HepG2 (cell line): ENCODE measurements at regions of chr19 and their contacts with region 1.

Region 1: GRCh38 chr19:38683393-38684080 is 36.1 kb downstream of the ACTN4 start:
- DNase-seq: peak; percentile 96
- ATAC-seq: peak; percentile 85
- H3K4me3 ChIP-seq: peak overlapping the region in 1 of 3 experiments; percentile 27; a peak in 2 of 6 replicates
- H3K27ac ChIP-seq: peak overlapping the region; percentile 85
- H3K4me1 ChIP-seq: peaks cover 99% of the 10 kb centered on the region
- H3K27me3 ChIP-seq: no peaks in the 10 kb centered on the region
- CTCF ChIP-seq: no peak
- EP300 ChIP-seq: peak in 1 of 2 experiments; percentile 50; a peak in 2 of 4 replicates
- POLR2A ChIP-seq: peak in 1 of 2 experiments; percentile 35; a peak in 1 of 4 replicates
- RAD21 ChIP-seq: no peak

Region 2: GRCh38 chr19:38658462-38659306 is 24.9 kb before region 1 on chr19:
- CTCF ChIA-PET with region 1: no interaction called
- POLR2A ChIA-PET with region 1: interaction called, 34 read pairs
- in situ Hi-C with region 1: no loop called
- intact Hi-C with region 1: loop called (anchors 5 kb)
- DNase-seq: peak; percentile 95
- ATAC-seq: peak; percentile 80
- H3K4me3 ChIP-seq: no peak overlapping the region; a peak in 1 of 6 replicates
- H3K27ac ChIP-seq: peak overlapping the region; percentile 69
- H3K4me1 ChIP-seq: peaks cover 98% of the 10 kb centered on the region
- H3K27me3 ChIP-seq: no peaks in the 10 kb centered on the region
- CTCF ChIP-seq: no peak
- EP300 ChIP-seq: peak; percentile 36 to 62; a peak in 1 of 4 replicates
- POLR2A ChIP-seq: peak in 1 of 2 experiments; percentile 51; a peak in 2 of 4 replicates
- RAD21 ChIP-seq: no peak

Region 3: GRCh38 chr19:38666663-38667511 is 16.6 kb before region 1 on chr19:
- CTCF ChIA-PET with region 1: no interaction called
- POLR2A ChIA-PET with region 1: interaction called, 13 read pairs
- in situ Hi-C with region 1: no loop called
- intact Hi-C with region 1: loop called (anchors 1 kb)
- DNase-seq: no peak
- ATAC-seq: no peak
- H3K4me3 ChIP-seq: no peak overlapping the region
- H3K27ac ChIP-seq: peak overlapping the region; percentile 38
- H3K4me1 ChIP-seq: peaks cover 100% of the 10 kb centered on the region
- H3K27me3 ChIP-seq: no peaks in the 10 kb centered on the region
- CTCF ChIP-seq: no peak
- EP300 ChIP-seq: no peak
- POLR2A ChIP-seq: no peak
- RAD21 ChIP-seq: no peak

Region 4: DNA sequence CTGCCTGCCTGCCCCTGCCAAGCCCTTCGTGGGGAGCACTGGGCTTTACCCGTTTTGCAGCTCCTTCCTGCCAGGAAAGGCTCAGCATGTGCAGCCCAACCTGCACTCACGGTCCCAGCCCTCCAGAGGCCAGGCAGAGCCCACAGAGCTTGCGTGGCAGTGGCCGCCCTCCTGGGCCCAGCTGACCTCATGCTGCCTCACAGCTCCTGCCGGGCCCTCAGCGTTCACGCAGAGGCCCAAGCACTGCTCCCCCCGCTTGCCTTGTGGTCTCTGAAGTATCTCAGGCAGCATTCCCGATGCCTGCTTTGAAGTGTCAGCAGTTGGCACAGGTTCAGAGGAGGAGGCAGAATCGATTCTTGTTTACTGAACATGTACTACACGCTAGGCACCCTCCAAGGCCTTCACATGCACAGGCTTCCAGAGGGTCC is 28.2 kb after region 1 on chr19:
- CTCF ChIA-PET with region 1: no interaction called
- POLR2A ChIA-PET with region 1: no interaction called
- in situ Hi-C with region 1: no loop called
- intact Hi-C with region 1: no loop called
- DNase-seq: no peak
- ATAC-seq: peak; percentile 4; the same call in 1 of the 3 replicates
- H3K4me3 ChIP-seq: no peak overlapping the region
- H3K27ac ChIP-seq: no peak overlapping the region
- H3K4me1 ChIP-seq: peaks cover 14% of the 10 kb centered on the region
- H3K27me3 ChIP-seq: no peaks in the 10 kb centered on the region
- CTCF ChIP-seq: no peak
- EP300 ChIP-seq: no peak
- POLR2A ChIP-seq: 0 out of 4 replicates have a peak, but pooled peaks of 1 of the 2 experiments have one; percentile 10
- RAD21 ChIP-seq: no peak

Region 5: DNA sequence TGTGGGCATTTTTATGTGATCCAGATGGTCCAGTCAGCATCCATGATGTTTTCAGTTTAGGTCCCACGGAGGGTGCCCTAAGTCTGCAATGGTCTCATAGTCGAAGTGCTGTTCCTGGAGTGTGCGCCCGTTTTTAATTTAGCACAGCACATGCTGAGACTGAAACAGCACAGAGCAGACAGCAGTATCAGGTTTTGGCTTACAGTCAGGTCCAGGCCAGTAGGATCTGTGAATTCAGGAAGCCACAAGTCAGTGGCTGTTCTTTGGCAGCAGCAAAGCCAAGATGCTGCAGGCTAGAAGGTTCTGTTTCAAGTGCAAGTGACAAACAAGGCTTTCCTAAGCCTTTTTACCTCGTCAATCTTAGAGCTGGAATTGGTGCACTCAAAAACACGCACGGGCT is 330.5 kb after region 1 on chr19:
- CTCF ChIA-PET with region 1: no interaction called
- POLR2A ChIA-PET with region 1: no interaction called
- in situ Hi-C with region 1: no loop called
- intact Hi-C with region 1: no loop called
- DNase-seq: no peak
- ATAC-seq: no peak
- H3K4me3 ChIP-seq: no peak overlapping the region
- H3K27ac ChIP-seq: no peak overlapping the region
- H3K4me1 ChIP-seq: no peaks in the 10 kb centered on the region
- H3K27me3 ChIP-seq: no peaks in the 10 kb centered on the region
- CTCF ChIP-seq: no peak
- EP300 ChIP-seq: no peak
- POLR2A ChIP-seq: no peak
- RAD21 ChIP-seq: no peak